HAP-1 (cell line): ENCODE measurements at regions of chr2 and their contacts with region 1.

Region 1: DNA sequence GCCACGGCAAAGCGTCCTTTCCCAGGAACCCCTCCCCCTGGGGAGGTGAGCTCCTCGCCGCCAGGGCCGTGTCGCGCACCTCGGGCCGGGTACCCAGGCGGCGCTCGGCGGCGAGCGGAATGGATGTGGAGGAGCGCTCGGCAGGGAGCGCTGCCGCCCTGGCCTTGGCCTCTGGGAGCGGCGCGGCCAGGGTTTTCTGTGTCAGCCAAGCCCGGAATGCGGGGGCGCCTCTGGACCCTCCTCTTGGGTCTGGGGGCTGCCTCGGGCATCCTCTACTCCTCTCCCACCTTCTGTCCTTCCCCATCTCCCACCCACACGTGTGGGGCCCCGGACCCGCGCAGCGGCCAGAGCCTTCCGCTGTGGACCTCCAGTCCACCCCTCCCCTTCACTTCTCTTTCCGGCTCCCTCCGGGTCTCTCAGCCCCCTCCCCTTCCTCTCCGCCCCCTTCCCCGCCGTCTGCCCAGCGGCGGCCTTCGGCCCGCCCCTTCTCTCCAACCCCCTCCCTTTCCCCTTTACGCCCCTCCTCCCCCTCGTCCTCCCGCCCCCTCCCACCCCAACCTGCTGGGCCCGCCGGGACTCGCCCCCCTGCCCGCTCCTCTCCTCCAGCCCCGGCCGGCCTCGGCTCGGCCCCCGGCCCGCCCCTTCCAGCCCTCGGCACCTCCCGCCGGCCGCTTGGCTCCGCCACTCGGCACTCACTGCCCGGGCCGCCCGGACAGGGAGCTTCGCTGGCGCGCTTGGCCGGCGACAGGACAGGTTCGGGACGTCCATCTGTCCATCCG is at the start of gene MERTK:
- DNase-seq: peak; percentile 88 to 96
- H3K4me3 ChIP-seq: peak within 1 kb of the TSS; percentile 88
- H3K4me1 ChIP-seq: peaks cover 14% of the 10 kb centered on the region
- H3K27me3 ChIP-seq: no peaks in the 10 kb centered on the region

Region 2: DNA sequence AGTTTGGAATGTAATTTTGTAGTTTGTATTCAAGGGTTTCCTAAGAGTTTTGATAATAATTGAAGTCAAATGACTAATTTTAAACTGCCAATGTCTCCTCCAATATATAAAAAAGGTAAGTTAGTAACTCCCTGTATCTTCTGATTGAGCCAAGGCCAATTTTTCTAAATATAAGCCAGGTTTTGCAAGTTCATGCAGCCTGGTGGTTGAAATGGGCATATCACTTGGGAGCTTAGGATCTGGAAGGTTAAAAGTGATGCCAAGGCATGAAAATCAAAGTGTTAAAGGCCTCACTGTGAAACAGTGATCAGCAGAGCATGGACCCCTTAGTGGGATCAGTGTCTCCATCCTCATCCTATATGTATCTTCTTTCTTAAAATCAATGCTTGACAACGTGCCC is 60.8 kb after region 1 on chr2:
- in situ Hi-C with region 1: loop called (anchors 10 kb)
- DNase-seq: no peak
- H3K4me3 ChIP-seq: no peak overlapping the region
- H3K4me1 ChIP-seq: peaks cover 20% of the 10 kb centered on the region
- H3K27me3 ChIP-seq: no peaks in the 10 kb centered on the region

Region 3: DNA sequence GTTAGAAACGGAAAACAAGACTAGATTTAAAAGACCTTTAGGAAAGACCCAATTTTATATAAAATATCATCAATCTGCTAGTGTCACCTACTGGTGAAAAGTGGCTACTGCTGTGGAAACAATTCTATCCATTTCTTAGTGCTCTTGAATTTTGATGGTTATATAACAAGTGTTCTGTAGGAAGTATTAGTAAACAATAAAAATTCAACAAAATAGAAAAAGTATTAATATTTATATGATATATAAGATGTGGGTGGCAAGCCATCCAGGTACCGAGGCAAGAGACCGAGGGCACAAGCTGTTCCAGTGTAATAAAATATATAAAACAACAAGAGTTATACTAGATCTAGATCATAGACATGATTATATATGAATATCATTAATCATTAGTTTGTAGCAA is 150.8 kb after region 1 on chr2:
- in situ Hi-C with region 1: loop called (anchors 5 kb)
- DNase-seq: peak; percentile 44 to 71
- H3K4me3 ChIP-seq: no peak overlapping the region
- H3K4me1 ChIP-seq: peaks cover 3% of the 10 kb centered on the region
- H3K27me3 ChIP-seq: no peaks in the 10 kb centered on the region

Region 4: DNA sequence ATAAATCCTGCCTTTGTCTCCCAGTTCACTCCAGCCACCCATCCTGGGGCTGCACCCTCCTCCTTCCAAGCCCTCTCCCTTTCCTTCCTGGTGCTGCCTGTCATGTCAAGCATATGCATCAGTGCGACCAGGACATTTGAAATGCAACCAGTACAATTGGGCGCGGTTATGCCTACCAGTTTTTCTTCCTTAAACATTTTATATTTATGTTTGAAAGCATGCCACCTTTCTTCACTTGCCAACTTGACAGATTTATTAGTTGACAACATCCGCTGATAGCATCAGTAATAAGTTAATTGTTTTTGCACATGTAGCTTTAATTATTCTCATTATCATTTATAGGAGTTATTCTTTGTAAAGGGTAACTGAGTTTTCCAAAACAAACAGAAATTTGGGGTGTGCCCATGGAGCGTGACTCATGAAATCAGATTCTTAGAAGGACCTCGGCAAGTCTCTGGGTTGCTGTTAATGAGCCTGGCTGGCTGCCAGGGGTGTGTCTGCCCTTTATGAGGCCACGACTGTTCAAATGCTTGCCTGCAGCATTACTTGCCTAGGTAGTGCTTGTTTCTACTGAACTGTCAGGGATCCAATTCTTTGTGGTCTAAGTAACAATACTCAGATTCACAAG is 971.3 kb after region 1 on chr2:
- in situ Hi-C with region 1: no loop called
- DNase-seq: peak; percentile 72 to 87
- H3K4me3 ChIP-seq: no peak overlapping the region
- H3K4me1 ChIP-seq: peaks cover 8% of the 10 kb centered on the region
- H3K27me3 ChIP-seq: peaks cover 3% of the 10 kb centered on the region; the same call in 1 of the 2 replicates